Activated CD8-positive, alpha-beta memory T cell treated with anti-CD3 and anti-CD28 coated beads, Interleukin-2, amount 10 ng/mL, durations not matched to agents 7 days and 5 days (primary cell): ENCODE measurements at regions of chr9 and their contacts with region 1.

Region 1: GRCh38 chr9:127980706-127981558 is at the start of gene EEIG1:
- DNase-seq: peak; percentile 96
- ATAC-seq: peak; percentile 93
- H3K4me3 Mint-ChIP-seq: peak within 1 kb of the TSS; percentile 97
- H3K27ac Mint-ChIP-seq: peak within 1 kb of the TSS; percentile 91
- H3K4me1 Mint-ChIP-seq: peaks cover 52% of the 10 kb centered on the region
- H3K27me3 Mint-ChIP-seq: no peaks in the 10 kb centered on the region
- total RNA-seq, gene EEIG1: 60.8 to 116 TPM

Region 2: GRCh38 chr9:127884427-127884911 is 96.5 kb before region 1 on chr9:
- CTCF ChIA-PET with region 1: no interaction called
- DNase-seq: no peak
- ATAC-seq: no peak
- H3K4me3 Mint-ChIP-seq: no peak overlapping the region
- H3K27ac Mint-ChIP-seq: peak overlapping the region; percentile 49
- H3K4me1 Mint-ChIP-seq: peaks cover 5% of the 10 kb centered on the region
- H3K27me3 Mint-ChIP-seq: no peaks in the 10 kb centered on the region

Region 3: GRCh38 chr9:127955294-127956035 is 25.5 kb before region 1 on chr9:
- CTCF ChIA-PET with region 1: interaction called, 12 read pairs
- DNase-seq: peak; percentile 85
- ATAC-seq: peak; percentile 96
- H3K4me3 Mint-ChIP-seq: no peak overlapping the region
- H3K27ac Mint-ChIP-seq: peak overlapping the region; percentile 8
- H3K4me1 Mint-ChIP-seq: peaks cover 54% of the 10 kb centered on the region
- H3K27me3 Mint-ChIP-seq: no peaks in the 10 kb centered on the region

Region 4: GRCh38 chr9:127970401-127971313 is 10.3 kb before region 1 on chr9:
- CTCF ChIA-PET with region 1: interaction called, 10 read pairs
- DNase-seq: peak; percentile 92
- ATAC-seq: peak; percentile 85
- H3K4me3 Mint-ChIP-seq: peak overlapping the region; percentile 68
- H3K27ac Mint-ChIP-seq: peak overlapping the region; percentile 90
- H3K4me1 Mint-ChIP-seq: peaks cover 89% of the 10 kb centered on the region
- H3K27me3 Mint-ChIP-seq: no peaks in the 10 kb centered on the region

Region 5: DNA sequence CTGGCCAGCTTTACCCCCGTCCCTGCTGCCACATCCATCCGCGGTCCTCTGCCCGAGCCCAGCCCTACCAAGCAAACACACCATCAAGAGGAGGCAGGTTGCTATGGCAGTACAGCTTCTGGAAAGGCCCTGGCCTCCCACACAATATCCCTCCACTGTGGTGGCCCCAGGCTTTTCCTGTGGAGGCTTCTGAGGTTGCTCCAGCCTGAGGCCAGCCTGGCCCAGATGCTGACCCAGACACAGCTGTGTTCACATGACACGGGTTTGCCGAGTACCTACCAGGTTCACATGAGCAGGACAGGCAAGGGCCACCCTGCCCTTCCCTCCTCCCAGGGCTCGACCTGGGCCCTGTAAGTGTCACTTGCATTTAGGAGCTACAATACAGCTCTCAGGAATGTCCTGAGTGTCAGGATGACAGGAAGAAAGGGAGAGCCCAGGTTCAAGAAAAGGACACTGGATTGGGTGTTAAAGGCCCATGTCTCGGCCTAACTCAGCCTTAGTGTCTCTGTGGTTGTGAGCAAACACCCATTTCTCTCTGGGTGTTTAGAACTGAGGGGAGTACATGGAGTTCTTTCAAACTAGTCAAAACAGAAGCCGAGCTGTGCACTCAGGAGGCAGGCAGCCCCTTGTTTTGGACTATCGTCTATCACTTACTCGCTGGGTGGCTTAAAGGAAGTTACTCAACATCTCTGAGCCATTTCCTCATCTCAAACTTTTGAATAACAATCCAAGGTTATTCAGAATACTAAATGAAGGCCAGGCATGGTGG is 46.0 kb after region 1 on chr9:
- CTCF ChIA-PET with region 1: interaction called, 42 read pairs
- DNase-seq: peak; percentile 70
- ATAC-seq: peak; percentile 20
- H3K4me3 Mint-ChIP-seq: peak overlapping the region; percentile 20
- H3K27ac Mint-ChIP-seq: peak overlapping the region; percentile 95
- H3K4me1 Mint-ChIP-seq: peaks cover 91% of the 10 kb centered on the region
- H3K27me3 Mint-ChIP-seq: peaks cover 3% of the 10 kb centered on the region